ENCODE measurements at regions of chr1 and their contacts with region 1.

Region 1: GRCh38 chr1:178542560-178543356 is 29.8 kb downstream of the TEX35 start:
- DNase-seq: peak; percentile 92 to 96
- H3K4me3 ChIP-seq: peak overlapping the region; percentile 65 to 88 (median 80)
- H3K27ac ChIP-seq: peak overlapping the region; percentile 58 to 88 (median 87)
- H3K4me1 ChIP-seq: peaks cover 12 to 41% (median 33%) of the 10 kb centered on the region in 4 donors
- H3K27me3 ChIP-seq: no peaks in the 10 kb centered on the region
- CTCF ChIP-seq: peak in 6 of 7 experiments; percentile 52 to 100 (median 100)
- EP300 ChIP-seq: no peak
- POLR2A ChIP-seq: no peak

Region 2: GRCh38 chr1:178749581-178750166 is 206.9 kb after region 1 on chr1:
- intact Hi-C with region 1: loop called (anchors 5 kb)
- DNase-seq: no peak
- H3K4me3 ChIP-seq: no peak overlapping the region
- H3K27ac ChIP-seq: no peak overlapping the region
- H3K4me1 ChIP-seq: peaks cover 0 to 9% (median 5%) of the 10 kb centered on the region in 4 donors
- H3K27me3 ChIP-seq: no peaks in the 10 kb centered on the region
- CTCF ChIP-seq: no peak
- EP300 ChIP-seq: no peak
- POLR2A ChIP-seq: no peak